Posterior cingulate gyrus (tissue), 11 donors: ENCODE measurements at regions of chr14 and their contacts with region 1.

Region 1: DNA sequence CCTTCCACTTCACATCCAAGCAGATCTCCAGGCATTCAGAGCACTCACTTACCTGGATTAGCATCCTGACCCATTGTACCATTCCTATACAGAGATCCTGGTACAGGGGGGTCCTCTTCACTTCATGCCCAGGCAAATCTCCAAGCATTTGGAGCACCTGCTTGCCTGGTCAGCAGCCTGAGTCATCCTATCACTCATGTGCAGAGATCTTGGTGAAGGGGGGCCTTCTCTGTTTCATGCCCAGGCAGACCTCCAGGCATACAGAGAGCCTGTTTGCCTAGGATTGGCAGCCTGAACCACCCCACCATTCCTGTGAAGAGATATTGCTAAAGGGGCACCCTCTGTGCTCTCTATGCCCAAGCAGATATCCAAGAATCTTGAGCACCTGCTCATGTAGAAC is 111.1 kb upstream of the CCDC175 start:
- DNase-seq: no peak

Region 2: DNA sequence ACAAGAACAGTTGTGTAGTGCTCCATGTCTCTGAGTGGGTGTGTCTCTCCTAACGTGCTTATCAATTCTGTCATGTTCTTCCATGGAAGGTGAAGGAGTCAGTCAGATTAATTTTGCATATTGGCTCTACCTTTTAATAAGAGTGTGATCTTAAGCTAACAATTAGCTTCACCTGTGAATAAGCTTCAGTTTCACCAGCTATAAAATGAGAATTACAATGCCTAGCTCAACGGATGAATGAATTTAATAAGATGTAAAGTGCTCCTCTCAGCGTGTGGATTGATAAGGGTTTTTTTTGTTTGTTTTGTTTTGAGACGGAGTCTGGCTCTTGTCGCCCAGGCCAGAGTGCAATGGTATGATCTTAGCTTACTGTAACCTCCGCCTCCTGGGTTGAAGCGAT is 143.8 kb before region 1 on chr14:
- intact Hi-C with region 1: no loop called
- DNase-seq: no peak

Region 3: DNA sequence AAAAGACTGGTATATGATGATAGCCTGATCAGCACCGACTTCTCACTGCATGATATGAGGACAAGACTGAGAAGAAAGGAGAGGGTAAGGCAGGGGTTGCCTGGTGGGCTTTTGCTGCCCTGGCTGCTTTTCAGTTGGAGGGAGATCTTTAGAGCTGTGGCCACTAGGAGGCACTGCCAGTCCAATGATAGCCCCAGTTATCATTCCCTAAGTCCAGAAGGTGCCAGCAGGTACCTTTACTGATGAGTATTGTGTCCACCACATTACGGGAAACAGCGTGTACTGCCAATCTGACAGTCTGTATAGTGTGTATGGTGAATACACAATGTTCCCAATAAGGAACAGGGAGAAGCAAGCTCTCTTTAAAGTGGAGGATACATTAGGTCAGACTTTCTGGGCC is 55.3 kb before region 1 on chr14:
- intact Hi-C with region 1: loop called (anchors 2 kb)
- DNase-seq: peak in 2 of 10 donors; percentile 20 to 58

Region 4: GRCh38 chr14:59986556-59987059 is 298.9 kb after region 1 on chr14:
- intact Hi-C with region 1: no loop called
- DNase-seq: no peak